B cell (primary cell): ENCODE measurements at regions of chr6 and their contacts with region 1.

Region 1: DNA sequence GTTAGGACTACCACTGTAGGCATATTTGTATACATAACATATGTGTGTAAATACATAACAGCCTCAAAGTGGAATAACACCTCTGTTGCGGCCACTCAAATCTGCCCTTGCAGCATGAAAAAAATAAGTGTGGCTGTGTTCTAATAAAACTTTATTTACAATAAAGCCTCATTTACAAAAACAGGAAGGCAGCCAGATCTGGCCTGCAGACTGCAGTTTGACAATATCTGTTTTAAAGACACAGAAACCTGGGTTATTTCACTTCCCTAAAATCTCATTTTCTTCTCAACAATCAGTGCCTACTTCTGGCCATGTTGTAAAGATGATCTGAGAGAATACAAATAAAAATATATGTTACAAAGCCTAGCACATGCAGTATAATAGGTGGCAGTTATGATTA is 53.9 kb upstream of the SCML4 start:
- DNase-seq: peak; percentile 53
- ATAC-seq: peak; percentile 53
- H3K4me3 ChIP-seq: no peak overlapping the region
- H3K4me3 Mint-ChIP-seq: no peak overlapping the region
- H3K27ac ChIP-seq: peak overlapping the region; percentile 37 to 63
- H3K27ac Mint-ChIP-seq: peak overlapping the region; percentile 50
- H3K4me1 ChIP-seq: peaks cover 11% of the 10 kb centered on the region in 2 donors
- H3K4me1 Mint-ChIP-seq: peaks cover 15% of the 10 kb centered on the region
- H3K27me3 ChIP-seq: no peaks in the 10 kb centered on the region
- H3K27me3 Mint-ChIP-seq: no peaks in the 10 kb centered on the region
- CTCF ChIP-seq: no peak

Region 2: GRCh38 chr6:107811591-107812218 is 66.3 kb before region 1 on chr6:
- CTCF ChIA-PET with region 1: no interaction called
- POLR2A ChIA-PET with region 1: no interaction called
- intact Hi-C with region 1: no loop called
- DNase-seq: peak; percentile 47
- ATAC-seq: peak; percentile 57
- H3K4me3 ChIP-seq: no peak overlapping the region
- H3K4me3 Mint-ChIP-seq: peak overlapping the region; percentile 12
- H3K27ac ChIP-seq: peak overlapping the region; percentile 17 to 30
- H3K27ac Mint-ChIP-seq: peak overlapping the region; percentile 54
- H3K4me1 ChIP-seq: peaks cover 6 to 9% of the 10 kb centered on the region in 2 donors
- H3K4me1 Mint-ChIP-seq: peaks cover 14% of the 10 kb centered on the region
- H3K27me3 ChIP-seq: no peaks in the 10 kb centered on the region
- H3K27me3 Mint-ChIP-seq: no peaks in the 10 kb centered on the region
- CTCF ChIP-seq: no peak

Region 3: GRCh38 chr6:107866606-107867301 is 11.2 kb before region 1 on chr6:
- CTCF ChIA-PET with region 1: interaction called, 17 read pairs
- POLR2A ChIA-PET with region 1: no interaction called
- intact Hi-C with region 1: no loop called
- DNase-seq: peak; percentile 62
- ATAC-seq: peak; percentile 24
- H3K4me3 ChIP-seq: peak overlapping the region in 3 of 5 experiments; percentile 22 to 37 (median 30)
- H3K4me3 Mint-ChIP-seq: peak overlapping the region; percentile 39
- H3K27ac ChIP-seq: no peak overlapping the region
- H3K27ac Mint-ChIP-seq: no peak overlapping the region
- H3K4me1 ChIP-seq: peaks cover 28 to 30% of the 10 kb centered on the region in 2 donors
- H3K4me1 Mint-ChIP-seq: peaks cover 43% of the 10 kb centered on the region
- H3K27me3 ChIP-seq: no peaks in the 10 kb centered on the region
- H3K27me3 Mint-ChIP-seq: peaks cover 3% of the 10 kb centered on the region
- CTCF ChIP-seq: peak; percentile 80

Region 4: GRCh38 chr6:107894821-107895396 is 16.9 kb after region 1 on chr6:
- CTCF ChIA-PET with region 1: interaction called, 8 read pairs
- POLR2A ChIA-PET with region 1: no interaction called
- intact Hi-C with region 1: loop called (anchors 2 kb)
- DNase-seq: peak; percentile 77
- ATAC-seq: peak; percentile 80
- H3K4me3 ChIP-seq: peak overlapping the region in 1 of 5 experiments; percentile 27
- H3K4me3 Mint-ChIP-seq: peak overlapping the region; percentile 48
- H3K27ac ChIP-seq: peak overlapping the region; percentile 75 to 76
- H3K27ac Mint-ChIP-seq: peak overlapping the region; percentile 96
- H3K4me1 ChIP-seq: peaks cover 49 to 53% of the 10 kb centered on the region in 2 donors
- H3K4me1 Mint-ChIP-seq: peaks cover 55% of the 10 kb centered on the region
- H3K27me3 ChIP-seq: no peaks in the 10 kb centered on the region
- H3K27me3 Mint-ChIP-seq: no peaks in the 10 kb centered on the region
- CTCF ChIP-seq: no peak

Region 5: GRCh38 chr6:108080010-108080780 is 202.2 kb after region 1 on chr6:
- CTCF ChIA-PET with region 1: no interaction called
- POLR2A ChIA-PET with region 1: no interaction called
- intact Hi-C with region 1: no loop called
- DNase-seq: no peak
- ATAC-seq: no peak
- H3K4me3 ChIP-seq: no peak overlapping the region
- H3K4me3 Mint-ChIP-seq: no peak overlapping the region
- H3K27ac ChIP-seq: no peak overlapping the region
- H3K27ac Mint-ChIP-seq: no peak overlapping the region
- H3K4me1 ChIP-seq: peaks cover 3 to 5% of the 10 kb centered on the region in 2 donors
- H3K4me1 Mint-ChIP-seq: peaks cover 5% of the 10 kb centered on the region
- H3K27me3 ChIP-seq: peaks cover 0 to 6% (median 0%) of the 10 kb centered on the region in 4 experiments
- H3K27me3 Mint-ChIP-seq: peaks cover 36% of the 10 kb centered on the region
- CTCF ChIP-seq: no peak